ENCODE measurements at regions of chr14 and their contacts with region 1.

Region 1: GRCh38 chr14:48970803-48971394 is 615.3 kb downstream of the RPS29 start:
- DNase-seq: no peak
- H3K4me3 ChIP-seq: no peak overlapping the region
- H3K27ac ChIP-seq: no peak overlapping the region
- H3K4me1 ChIP-seq: no peaks in the 10 kb centered on the region
- H3K27me3 ChIP-seq: no peaks in the 10 kb centered on the region
- CTCF ChIP-seq: no peak

Region 2: GRCh38 chr14:48914382-48914781 is 56.5 kb before region 1 on chr14:
- CTCF ChIA-PET with region 1: no interaction called
- dilution Hi-C with region 1: no loop called
- in situ Hi-C with region 1: no loop called
- intact Hi-C with region 1: loop called (anchors 5 kb)
- DNase-seq: no peak
- H3K4me3 ChIP-seq: no peak overlapping the region
- H3K27ac ChIP-seq: no peak overlapping the region
- H3K4me1 ChIP-seq: no peaks in the 10 kb centered on the region
- H3K27me3 ChIP-seq: no peaks in the 10 kb centered on the region
- CTCF ChIP-seq: no peak

Measured in mammary epithelial cell (primary cell).